Activated naive CD4-positive, alpha-beta T cell treated with anti-CD3 and anti-CD28 coated beads, Interleukin-2, amount 10 ng/mL, durations not matched to agents 7 days and 5 days (primary cell): ENCODE measurements at regions of chr16 and their contacts with region 1.

Region 1: DNA sequence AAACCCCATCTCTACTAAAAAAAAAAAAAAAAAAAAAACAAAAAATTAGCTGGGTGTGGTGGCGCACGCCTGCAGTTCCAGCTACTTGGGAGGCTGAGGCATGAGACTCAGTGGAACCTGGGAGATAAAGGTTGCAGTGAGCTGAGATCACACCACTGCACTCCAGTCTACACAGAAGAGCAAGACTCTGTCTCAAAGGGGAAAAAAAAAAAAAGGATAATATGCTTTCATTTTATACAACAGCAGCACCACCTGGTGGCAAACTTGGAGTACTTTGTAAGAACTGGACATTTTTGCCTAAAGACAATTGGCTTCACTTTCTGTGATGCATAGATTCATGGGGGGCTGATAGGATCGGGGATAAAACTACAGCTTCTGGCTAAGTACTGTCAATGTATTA is 8.5 kb downstream of the CHTF8 start:
- DNase-seq: peak; percentile 77
- H3K4me3 Mint-ChIP-seq: no peak overlapping the region
- H3K27ac Mint-ChIP-seq: no peak overlapping the region
- H3K4me1 Mint-ChIP-seq: peaks cover 19% of the 10 kb centered on the region
- H3K27me3 Mint-ChIP-seq: no peaks in the 10 kb centered on the region

Region 2: DNA sequence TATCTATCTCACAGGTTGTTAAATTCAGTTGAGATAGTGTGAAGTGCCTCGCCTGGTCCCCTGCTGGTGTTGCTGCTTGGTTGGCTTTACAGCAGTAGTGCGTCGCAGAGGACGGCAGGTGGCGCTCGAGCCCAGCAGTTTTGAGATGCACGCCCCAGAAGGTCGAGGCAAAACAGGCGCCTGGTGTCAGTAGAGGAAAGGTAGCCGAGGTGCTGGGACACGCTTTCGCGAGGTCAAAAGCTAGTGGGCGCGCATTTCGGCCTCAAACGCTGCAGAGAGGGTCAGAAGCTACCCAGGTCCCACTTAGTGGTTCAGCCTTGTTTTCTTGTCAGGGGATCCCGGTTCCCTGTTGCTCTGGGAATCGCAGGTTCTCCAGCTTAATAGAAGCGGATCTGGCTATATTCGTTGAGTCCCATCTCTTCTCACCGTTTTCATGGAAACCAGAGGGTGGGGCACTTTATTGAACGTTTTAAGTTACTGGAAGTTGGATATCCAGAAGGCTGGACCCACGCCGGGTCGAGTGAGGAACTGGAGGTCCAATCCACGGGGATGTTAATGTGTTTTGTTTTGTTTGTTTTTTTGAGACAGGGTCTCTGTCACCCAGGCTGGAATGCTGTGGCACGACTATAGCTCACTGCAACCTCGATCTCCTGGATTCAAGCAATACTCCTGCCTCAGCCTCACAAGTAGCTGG is 595.1 kb before region 1 on chr16:
- CTCF ChIA-PET with region 1: interaction called, 30 read pairs
- DNase-seq: peak; percentile 92
- H3K4me3 Mint-ChIP-seq: peak overlapping the region; percentile 81
- H3K27ac Mint-ChIP-seq: peak overlapping the region; percentile 17
- H3K4me1 Mint-ChIP-seq: peaks cover 26% of the 10 kb centered on the region
- H3K27me3 Mint-ChIP-seq: peaks cover 12% of the 10 kb centered on the region

Region 3: GRCh38 chr16:68590201-68590994 is 533.5 kb before region 1 on chr16:
- CTCF ChIA-PET with region 1: interaction called, 14 read pairs
- DNase-seq: peak; percentile 72
- H3K4me3 Mint-ChIP-seq: no peak overlapping the region
- H3K27ac Mint-ChIP-seq: no peak overlapping the region
- H3K4me1 Mint-ChIP-seq: peaks cover 2% of the 10 kb centered on the region
- H3K27me3 Mint-ChIP-seq: no peaks in the 10 kb centered on the region

Region 4: GRCh38 chr16:68695575-68695974 is 428.3 kb before region 1 on chr16:
- CTCF ChIA-PET with region 1: no interaction called
- DNase-seq: no peak
- H3K4me3 Mint-ChIP-seq: no peak overlapping the region
- H3K27ac Mint-ChIP-seq: no peak overlapping the region
- H3K4me1 Mint-ChIP-seq: no peaks in the 10 kb centered on the region
- H3K27me3 Mint-ChIP-seq: no peaks in the 10 kb centered on the region

Region 5: DNA sequence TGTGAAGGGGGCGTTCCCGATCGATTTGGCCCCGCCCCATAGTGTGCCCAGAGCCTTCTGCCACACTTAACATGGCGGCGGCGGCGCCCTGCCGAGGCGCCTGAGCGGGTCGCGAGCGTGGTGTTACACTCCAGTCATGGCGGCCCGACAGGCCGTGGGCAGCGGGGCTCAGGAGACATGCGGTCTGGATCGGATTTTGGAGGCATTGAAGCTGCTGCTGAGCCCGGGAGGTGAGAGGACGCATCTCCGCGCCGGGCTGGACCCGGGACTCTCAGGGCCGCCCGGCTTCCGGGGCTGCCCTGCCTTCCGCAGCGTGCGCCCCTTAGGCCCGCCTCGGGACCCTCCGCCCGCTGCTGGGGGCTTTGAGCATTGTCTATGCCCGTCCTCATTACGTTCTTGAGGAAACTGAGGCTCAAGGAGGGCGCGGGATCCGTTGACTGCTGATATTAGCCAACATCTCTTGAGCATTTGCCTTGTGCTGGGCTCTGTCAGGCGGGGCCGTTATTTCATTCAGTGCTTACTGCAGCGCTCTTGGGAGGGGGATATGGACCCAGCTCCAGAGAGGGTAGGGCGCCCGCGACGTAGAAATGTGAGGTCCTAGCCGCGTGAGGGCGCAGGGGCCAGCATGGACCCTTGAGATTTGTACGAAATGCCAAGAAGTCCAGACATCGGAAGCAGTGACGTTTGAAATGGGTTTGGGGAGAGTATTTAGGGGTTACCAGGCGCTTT is 280.3 kb before region 1 on chr16 and contains the start of gene TANGO6:
- CTCF ChIA-PET with region 1: interaction called, 16 read pairs
- DNase-seq: peak; percentile 93
- H3K4me3 Mint-ChIP-seq: peak within 1 kb of the TSS; percentile 97
- H3K27ac Mint-ChIP-seq: peak within 1 kb of the TSS; percentile 89
- H3K4me1 Mint-ChIP-seq: peaks cover 38% of the 10 kb centered on the region
- H3K27me3 Mint-ChIP-seq: no peaks in the 10 kb centered on the region

Region 6: GRCh38 chr16:68902008-68902968 is 221.6 kb before region 1 on chr16:
- CTCF ChIA-PET with region 1: interaction called, 20 read pairs
- DNase-seq: peak; percentile 37
- H3K4me3 Mint-ChIP-seq: no peak overlapping the region
- H3K27ac Mint-ChIP-seq: no peak overlapping the region
- H3K4me1 Mint-ChIP-seq: no peaks in the 10 kb centered on the region
- H3K27me3 Mint-ChIP-seq: no peaks in the 10 kb centered on the region

Region 7: DNA sequence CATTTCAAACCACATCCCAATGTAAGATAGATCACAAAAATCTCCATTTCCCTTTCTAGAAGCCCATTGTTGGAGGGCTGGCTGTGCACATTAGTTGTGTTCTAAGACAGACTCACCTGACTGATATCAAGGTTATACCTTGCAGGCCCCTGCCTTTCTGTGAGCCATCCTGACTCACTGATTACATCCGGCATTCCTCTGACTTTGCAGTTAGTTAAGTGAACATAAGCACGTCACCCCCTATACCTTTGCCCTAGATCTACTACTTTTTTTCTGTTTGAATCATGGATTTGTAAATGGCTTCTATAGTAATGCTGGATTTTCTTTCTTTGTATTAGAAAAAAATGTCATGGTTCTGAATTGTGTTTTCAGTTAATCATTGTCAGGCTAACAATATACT is 202.3 kb before region 1 on chr16:
- CTCF ChIA-PET with region 1: no interaction called
- DNase-seq: no peak
- H3K4me3 Mint-ChIP-seq: no peak overlapping the region
- H3K27ac Mint-ChIP-seq: peak overlapping the region; percentile 7
- H3K4me1 Mint-ChIP-seq: no peaks in the 10 kb centered on the region
- H3K27me3 Mint-ChIP-seq: no peaks in the 10 kb centered on the region

Region 8: DNA sequence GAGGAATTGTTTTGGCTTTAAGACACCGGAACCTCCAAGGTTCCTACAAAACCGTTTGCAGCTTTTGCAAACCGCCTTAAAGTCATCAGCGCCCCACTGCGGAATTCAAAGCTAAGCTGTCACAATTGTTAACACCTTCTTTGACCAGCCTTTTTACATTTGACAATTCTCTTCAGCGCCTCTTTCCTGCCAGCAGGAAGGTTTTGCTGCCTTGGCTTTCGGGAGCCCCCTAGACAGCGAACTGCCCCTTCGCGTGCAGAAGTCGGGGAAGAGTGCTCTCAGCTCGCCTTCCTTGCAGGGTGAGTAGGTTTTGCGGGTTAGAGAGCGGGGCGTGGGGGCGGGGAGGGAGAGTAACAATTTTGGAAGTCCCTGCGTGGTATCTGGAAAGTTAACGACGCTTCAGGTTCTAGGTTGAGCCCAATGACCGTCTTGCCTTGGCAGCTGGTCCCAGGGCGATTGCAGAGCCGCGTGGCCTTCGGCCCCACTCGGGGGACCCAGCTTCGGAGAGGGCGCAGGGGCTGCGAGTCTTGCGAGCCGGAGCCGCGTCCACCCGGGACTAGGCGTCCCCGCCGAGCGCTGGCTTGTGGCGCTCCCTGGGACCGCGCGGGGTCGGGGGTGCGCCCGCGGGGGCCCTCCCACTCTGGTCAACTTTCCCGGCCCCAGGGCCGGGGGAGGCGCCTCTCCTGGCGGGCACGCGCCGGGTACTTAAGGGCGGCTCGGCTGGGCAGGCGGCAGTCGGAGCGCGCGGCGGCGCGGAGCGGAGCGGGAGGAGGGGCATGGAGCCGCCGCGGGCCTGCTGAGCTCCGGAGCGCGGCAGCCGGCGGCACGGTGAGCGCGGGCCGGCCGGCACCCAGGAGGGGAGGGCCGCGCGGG is 18.2 kb before region 1 on chr16 and contains the start of gene HAS3:
- CTCF ChIA-PET with region 1: interaction called, 12 read pairs
- DNase-seq: peak; percentile 57
- H3K4me3 Mint-ChIP-seq: peak within 1 kb of the TSS; percentile 81
- H3K27ac Mint-ChIP-seq: no peak within 1 kb of the TSS
- H3K4me1 Mint-ChIP-seq: peaks cover 20% of the 10 kb centered on the region
- H3K27me3 Mint-ChIP-seq: peaks cover 79% of the 10 kb centered on the region

Region 9: DNA sequence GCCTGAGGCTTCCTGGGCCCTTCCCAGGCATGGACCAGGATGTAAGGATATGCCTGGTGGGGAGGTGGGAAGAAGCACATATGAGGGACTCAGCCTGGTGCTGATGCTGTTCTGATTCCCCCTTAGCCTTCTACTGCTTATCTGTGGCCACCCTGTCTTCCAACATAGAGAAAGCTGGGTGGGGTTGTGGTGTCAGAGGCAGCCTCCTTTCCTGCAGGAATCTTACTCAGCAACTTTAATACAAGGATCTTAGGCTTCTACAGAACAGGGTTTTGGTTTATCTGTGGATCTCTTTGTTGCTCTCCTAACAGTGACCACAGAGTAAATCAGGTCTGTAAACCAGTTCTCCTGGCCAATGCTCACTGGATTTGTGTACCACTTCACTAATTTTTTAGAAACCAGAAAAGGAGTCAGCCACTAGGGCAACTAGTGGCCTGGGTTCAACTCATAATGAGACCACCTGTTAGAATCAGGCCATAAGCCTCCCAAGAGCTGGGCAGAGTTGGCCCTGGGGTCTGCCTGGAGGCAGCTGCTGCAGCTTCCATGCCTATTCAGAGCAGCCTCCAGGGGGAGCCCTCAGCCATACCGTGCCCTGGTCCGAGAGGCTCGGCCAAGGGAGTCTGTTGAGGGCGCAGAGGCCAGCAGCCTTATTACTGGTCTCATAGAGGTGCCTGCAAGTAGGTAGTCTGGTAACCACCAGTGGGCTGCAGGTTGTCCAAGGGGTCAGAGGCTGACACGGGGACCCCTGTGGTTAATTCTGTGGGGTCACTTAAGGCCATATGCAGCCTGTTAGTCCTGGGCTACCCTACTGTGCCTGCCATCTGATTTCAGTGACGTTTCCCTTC is 11.4 kb before region 1 on chr16:
- CTCF ChIA-PET with region 1: interaction called, 53 read pairs
- DNase-seq: peak; percentile 64
- H3K4me3 Mint-ChIP-seq: no peak overlapping the region
- H3K27ac Mint-ChIP-seq: no peak overlapping the region
- H3K4me1 Mint-ChIP-seq: peaks cover 5% of the 10 kb centered on the region
- H3K27me3 Mint-ChIP-seq: peaks cover 20% of the 10 kb centered on the region